ENCODE measurements at regions of chr5 and their contacts with region 1.

Region 1: DNA sequence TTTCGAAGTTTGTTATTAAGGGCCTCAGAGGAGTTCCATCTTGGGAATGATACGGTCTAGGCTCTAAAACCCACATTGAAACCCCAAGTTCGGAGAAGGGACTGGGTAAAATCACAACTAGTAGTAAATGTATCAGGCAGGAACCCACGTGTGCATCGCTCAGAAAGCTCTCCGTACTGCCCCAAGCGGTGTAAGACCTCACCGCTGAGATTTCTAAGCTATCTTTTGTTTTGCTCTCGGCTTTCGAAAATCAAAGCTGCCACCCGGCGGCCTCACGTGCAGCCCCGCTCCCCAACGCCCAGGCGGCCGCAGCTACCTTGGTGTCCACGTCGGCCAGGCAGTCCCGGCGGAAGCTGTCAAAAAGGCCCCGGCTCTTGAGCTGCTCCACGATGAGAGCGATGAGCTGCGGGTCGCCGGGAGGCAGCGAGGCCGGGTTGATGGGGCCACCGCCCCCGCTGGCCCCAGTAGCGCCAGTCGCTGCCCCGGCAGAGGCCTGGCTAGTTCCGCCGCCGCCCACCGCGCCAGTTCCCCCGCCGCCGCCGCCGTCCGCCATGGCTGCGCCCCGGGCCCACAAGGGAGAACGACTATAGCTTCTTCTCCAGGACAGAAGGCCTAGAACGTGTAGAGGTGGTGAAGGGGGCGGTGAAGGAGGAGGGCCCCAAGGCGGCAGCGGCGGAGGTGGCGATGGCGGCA is 420 bp downstream of the BOD1 start:
- DNase-seq: peak; percentile 74
- H3K4me3 Mint-ChIP-seq: peak overlapping the region; percentile 81
- H3K27ac Mint-ChIP-seq: peak overlapping the region; percentile 74
- H3K4me1 Mint-ChIP-seq: peaks cover 35% of the 10 kb centered on the region
- H3K27me3 Mint-ChIP-seq: no peaks in the 10 kb centered on the region

Region 2: GRCh38 chr5:173592050-173592669 is 23.9 kb before region 1 on chr5:
- CTCF ChIA-PET with region 1: interaction called, 12 read pairs
- POLR2A ChIA-PET with region 1: no interaction called
- DNase-seq: peak; percentile 25
- H3K4me3 Mint-ChIP-seq: no peak overlapping the region
- H3K27ac Mint-ChIP-seq: no peak overlapping the region
- H3K4me1 Mint-ChIP-seq: no peaks in the 10 kb centered on the region
- H3K27me3 Mint-ChIP-seq: peaks cover 5% of the 10 kb centered on the region

Region 3: GRCh38 chr5:173872957-173873305 is 256.9 kb after region 1 on chr5:
- CTCF ChIA-PET with region 1: no interaction called
- POLR2A ChIA-PET with region 1: no interaction called
- DNase-seq: no peak
- H3K4me3 Mint-ChIP-seq: no peak overlapping the region
- H3K27ac Mint-ChIP-seq: no peak overlapping the region
- H3K4me1 Mint-ChIP-seq: no peaks in the 10 kb centered on the region
- H3K27me3 Mint-ChIP-seq: peaks cover 4% of the 10 kb centered on the region

Region 4: GRCh38 chr5:173887610-173888472 is 271.8 kb after region 1 on chr5 and contains the start of gene CPEB4:
- CTCF ChIA-PET with region 1: interaction called, 17 read pairs
- POLR2A ChIA-PET with region 1: interaction called, 11 read pairs
- DNase-seq: peak; percentile 97
- H3K4me3 Mint-ChIP-seq: peak within 1 kb of the TSS; percentile 99
- H3K27ac Mint-ChIP-seq: peak within 1 kb of the TSS; percentile 91
- H3K4me1 Mint-ChIP-seq: peaks cover 83% of the 10 kb centered on the region
- H3K27me3 Mint-ChIP-seq: no peaks in the 10 kb centered on the region
- total RNA-seq, gene CPEB4: 17.3 to 19.5 TPM

Region 5: DNA sequence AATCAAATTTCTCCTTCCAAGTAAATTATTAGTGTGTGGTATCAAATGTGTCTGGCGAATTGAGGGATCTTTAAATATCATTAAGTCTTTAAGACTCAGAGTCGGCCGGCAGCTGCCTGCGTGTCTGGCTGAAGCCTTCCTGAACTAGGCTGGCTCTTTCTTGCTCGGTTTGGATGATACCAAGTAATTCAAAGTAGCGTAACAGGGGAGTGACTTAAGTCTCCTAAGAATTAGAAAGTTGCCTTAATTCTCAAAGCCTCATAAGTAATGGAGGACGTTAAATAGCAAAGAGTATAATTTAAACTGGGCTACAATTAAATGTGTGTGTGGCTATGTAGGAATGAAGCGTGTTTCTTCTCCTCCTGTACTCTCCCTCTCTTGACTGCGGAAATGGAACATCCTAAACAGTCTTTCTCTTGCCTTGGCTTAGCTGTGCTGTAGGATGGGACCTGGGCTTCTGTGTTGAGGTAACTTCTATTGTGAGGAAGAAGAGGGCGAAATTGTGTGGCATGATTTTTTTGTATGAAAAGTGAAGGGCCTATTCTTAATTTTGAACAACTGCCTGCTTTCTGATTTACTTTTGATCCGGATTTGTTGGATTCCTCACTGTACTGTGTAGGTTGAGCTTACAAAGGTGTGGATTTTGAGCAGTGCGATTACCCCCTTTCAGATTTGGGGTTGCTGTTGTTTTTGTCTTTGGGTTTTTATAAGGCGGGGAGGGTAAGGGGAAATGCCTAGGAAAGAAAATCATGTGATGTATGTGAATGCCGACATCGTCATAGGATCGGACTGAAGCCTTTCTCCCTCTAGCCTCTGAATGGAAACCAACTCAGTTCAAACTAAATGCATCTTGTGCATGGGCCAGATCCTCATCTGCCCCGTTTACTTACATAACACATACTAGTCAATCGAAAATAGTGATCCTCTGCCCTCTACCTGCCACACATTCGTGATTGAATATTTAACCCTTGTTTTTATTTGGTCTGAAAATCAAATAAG is 302.1 kb after region 1 on chr5:
- CTCF ChIA-PET with region 1: interaction called, 13 read pairs
- POLR2A ChIA-PET with region 1: interaction called, 8 read pairs
- DNase-seq: peak; percentile 56
- H3K4me3 Mint-ChIP-seq: no peak overlapping the region
- H3K27ac Mint-ChIP-seq: no peak overlapping the region
- H3K4me1 Mint-ChIP-seq: peaks cover 3% of the 10 kb centered on the region
- H3K27me3 Mint-ChIP-seq: no peaks in the 10 kb centered on the region

Region 6: GRCh38 chr5:173925448-173926071 is 309.5 kb after region 1 on chr5:
- CTCF ChIA-PET with region 1: interaction called, 22 read pairs
- POLR2A ChIA-PET with region 1: interaction called, 4 read pairs
- DNase-seq: peak; percentile 51
- H3K4me3 Mint-ChIP-seq: no peak overlapping the region
- H3K27ac Mint-ChIP-seq: no peak overlapping the region
- H3K4me1 Mint-ChIP-seq: no peaks in the 10 kb centered on the region
- H3K27me3 Mint-ChIP-seq: no peaks in the 10 kb centered on the region

Region 7: DNA sequence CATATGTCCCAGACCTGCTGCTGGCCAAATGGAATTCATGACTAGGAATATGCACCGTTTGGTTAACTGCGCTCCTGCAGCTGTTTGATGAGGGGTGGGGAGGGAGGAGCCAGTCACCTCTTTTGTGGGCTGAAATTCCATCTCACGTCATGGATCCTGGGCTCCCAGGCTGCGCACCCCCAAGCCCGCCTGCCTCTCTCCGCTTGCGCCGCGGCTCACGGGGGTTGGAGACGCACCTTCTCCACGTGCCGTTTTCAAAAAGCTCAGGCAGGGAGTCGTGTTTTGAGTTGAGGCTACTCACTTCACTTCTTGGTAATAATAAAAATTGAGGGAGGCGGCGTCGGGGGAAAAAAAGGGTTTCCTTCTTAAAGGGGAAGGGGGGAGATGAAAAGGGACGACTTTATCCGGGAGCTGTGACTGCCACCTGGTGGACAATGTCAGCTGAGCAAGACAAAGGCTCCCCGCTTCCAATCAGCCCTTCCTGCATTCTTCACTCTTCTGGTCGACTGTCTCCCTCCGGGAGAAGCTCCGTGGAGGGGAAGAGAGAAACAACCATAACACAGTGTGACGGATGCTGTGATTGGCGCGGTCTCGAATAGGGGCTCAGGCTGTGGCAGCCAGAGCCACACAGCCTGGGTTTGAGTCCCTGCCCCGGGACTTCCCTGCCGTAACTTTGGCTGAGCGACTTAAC is 357.0 kb after region 1 on chr5:
- CTCF ChIA-PET with region 1: interaction called, 53 read pairs
- POLR2A ChIA-PET with region 1: interaction called, 9 read pairs
- DNase-seq: peak; percentile 78
- H3K4me3 Mint-ChIP-seq: peak overlapping the region; percentile 53
- H3K27ac Mint-ChIP-seq: no peak overlapping the region
- H3K4me1 Mint-ChIP-seq: peaks cover 12% of the 10 kb centered on the region
- H3K27me3 Mint-ChIP-seq: peaks cover 22% of the 10 kb centered on the region

Region 8: DNA sequence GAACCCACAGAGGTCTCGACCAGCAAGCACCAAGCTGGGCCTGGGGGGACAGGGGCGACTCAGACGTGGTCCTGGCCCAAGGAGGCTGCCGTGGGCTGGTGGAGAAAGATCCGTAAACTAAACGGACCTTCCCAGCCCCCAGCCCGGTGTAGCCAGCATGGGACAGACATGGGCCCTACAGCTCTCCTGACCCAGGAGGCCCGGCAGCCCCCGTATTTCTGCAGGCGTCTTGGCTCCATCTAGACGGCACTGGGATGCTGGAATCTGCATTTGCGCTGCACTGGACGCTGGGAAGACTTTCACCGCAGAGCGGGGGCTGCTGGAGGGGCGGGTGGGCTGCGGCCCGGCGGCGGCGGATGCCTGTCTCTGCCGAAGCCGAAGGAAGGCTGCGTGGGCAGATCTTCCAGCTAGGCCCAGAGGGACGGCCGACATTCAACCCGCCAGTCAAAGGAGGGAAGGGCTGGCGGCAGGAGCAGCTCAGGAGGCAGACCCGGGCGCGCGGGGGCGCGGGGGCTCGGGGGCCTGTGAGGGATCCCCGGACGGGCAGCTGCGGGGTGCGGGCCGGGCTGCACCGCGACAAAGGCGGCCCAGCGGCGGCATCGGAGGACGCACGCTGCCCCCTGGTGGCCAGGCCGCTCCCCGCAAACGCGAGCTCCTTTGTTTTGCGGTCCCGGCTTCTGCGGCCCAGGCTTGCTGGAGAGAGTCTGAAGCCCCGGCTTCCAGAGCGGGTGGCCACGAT is 695.7 kb after region 1 on chr5:
- CTCF ChIA-PET with region 1: interaction called, 17 read pairs
- POLR2A ChIA-PET with region 1: no interaction called
- DNase-seq: peak; percentile 63
- H3K4me3 Mint-ChIP-seq: no peak overlapping the region
- H3K27ac Mint-ChIP-seq: no peak overlapping the region
- H3K4me1 Mint-ChIP-seq: peaks cover 1% of the 10 kb centered on the region
- H3K27me3 Mint-ChIP-seq: peaks cover 14% of the 10 kb centered on the region

Measured in activated CD4-positive, alpha-beta memory T cell treated with anti-CD3 and anti-CD28 coated beads, Interleukin-2, amount 10 ng/mL, durations not matched to agents 7 days and 5 days (primary cell).